Stomach (tissue), 19 donors: ENCODE measurements at regions of chr1 and their contacts with region 1.

Region 1: GRCh38 chr1:176559878-176560277 is 96.9 kb downstream of the PAPPA2 start:
- DNase-seq: peak; percentile 40 to 90
- H3K4me3 ChIP-seq: no peak overlapping the region
- H3K27ac ChIP-seq: no peak overlapping the region
- H3K4me1 ChIP-seq: peaks cover 0 to 7% (median 5%) of the 10 kb centered on the region in 4 donors
- H3K27me3 ChIP-seq: peaks cover 0 to 37% (median 0%) of the 10 kb centered on the region in 3 donors
- CTCF ChIP-seq: peak in 5 of 7 experiments; percentile 68 to 80 (median 76)
- EP300 ChIP-seq: no peak
- POLR2A ChIP-seq: no peak

Region 2: GRCh38 chr1:176691251-176692228 is 131.7 kb after region 1 on chr1:
- intact Hi-C with region 1: loop called (anchors 10 kb)
- DNase-seq: peak in 1 of 2 donors; percentile 83
- H3K4me3 ChIP-seq: no peak overlapping the region
- H3K27ac ChIP-seq: peak overlapping the region in 2 of 5 donors; percentile 20 to 80
- H3K4me1 ChIP-seq: peaks cover 7 to 36% (median 22%) of the 10 kb centered on the region in 4 donors
- H3K27me3 ChIP-seq: no peaks in the 10 kb centered on the region
- CTCF ChIP-seq: peak in 5 of 7 experiments; percentile 45 to 66 (median 54)
- EP300 ChIP-seq: no peak
- POLR2A ChIP-seq: no peak

Region 3: GRCh38 chr1:176843352-176844297 is 283.7 kb after region 1 on chr1:
- intact Hi-C with region 1: loop called (anchors 5 kb)
- DNase-seq: peak in 1 of 2 donors; percentile 84
- H3K4me3 ChIP-seq: no peak overlapping the region
- H3K27ac ChIP-seq: no peak overlapping the region
- H3K4me1 ChIP-seq: peaks cover 0 to 16% (median 3%) of the 10 kb centered on the region in 4 donors
- H3K27me3 ChIP-seq: no peaks in the 10 kb centered on the region
- CTCF ChIP-seq: peak in 5 of 7 experiments; percentile 21 to 70 (median 32)
- EP300 ChIP-seq: no peak
- POLR2A ChIP-seq: no peak

Region 4: DNA sequence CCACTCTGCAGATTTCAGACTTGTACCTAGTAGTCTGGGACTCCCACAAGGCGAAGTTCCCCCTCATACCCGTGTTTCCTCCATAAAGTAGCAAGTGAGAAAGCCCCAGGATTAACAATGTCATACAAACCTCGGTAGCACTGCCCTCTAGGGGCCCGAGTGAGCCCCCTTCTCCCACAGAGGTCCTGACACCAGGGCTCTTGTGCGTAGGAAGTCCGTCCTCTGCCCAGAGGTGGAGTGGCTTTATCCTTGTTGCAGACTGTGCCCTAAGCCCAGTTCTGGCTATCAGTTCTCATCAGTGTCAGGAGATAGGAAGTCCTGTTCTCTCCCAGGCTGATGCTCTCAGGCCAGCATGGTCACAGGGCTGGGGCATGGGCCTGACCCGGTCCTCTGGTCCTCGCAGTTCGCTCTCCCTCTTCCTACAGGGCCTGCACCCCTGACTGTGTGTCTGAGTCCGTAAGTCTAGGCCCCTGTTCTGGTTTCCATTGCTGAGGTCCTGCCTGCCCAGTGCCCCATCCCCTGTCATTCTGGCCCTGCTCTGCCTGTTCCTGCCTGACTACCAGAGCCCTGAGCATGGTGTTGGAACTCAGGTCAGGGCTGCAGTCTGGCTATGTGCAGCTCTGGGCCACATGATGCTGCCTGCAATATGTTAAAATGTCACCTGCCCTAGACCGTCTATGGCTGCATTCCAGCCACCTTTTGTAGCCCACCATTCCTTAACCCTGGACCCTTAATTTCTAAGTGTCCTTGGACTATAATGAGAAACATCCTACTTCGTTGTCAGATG is 319.1 kb after region 1 on chr1:
- intact Hi-C with region 1: loop called (anchors 10 kb)
- DNase-seq: no peak
- H3K4me3 ChIP-seq: no peak overlapping the region
- H3K27ac ChIP-seq: no peak overlapping the region
- H3K4me1 ChIP-seq: no peaks in the 10 kb centered on the region
- H3K27me3 ChIP-seq: no peaks in the 10 kb centered on the region
- CTCF ChIP-seq: no peak
- EP300 ChIP-seq: no peak
- POLR2A ChIP-seq: no peak